HepG2 (cell line): ENCODE measurements at regions of chr7 and their contacts with region 1.

Region 1: GRCh38 chr7:121853307-121853706 is 19.7 kb upstream of the PTPRZ1 start:
- DNase-seq: no peak
- ATAC-seq: no peak
- H3K4me3 ChIP-seq: no peak overlapping the region
- H3K27ac ChIP-seq: no peak overlapping the region
- H3K4me1 ChIP-seq: no peaks in the 10 kb centered on the region
- H3K27me3 ChIP-seq: no peaks in the 10 kb centered on the region
- CTCF ChIP-seq: no peak
- EP300 ChIP-seq: no peak
- POLR2A ChIP-seq: no peak
- RAD21 ChIP-seq: no peak

Region 2: DNA sequence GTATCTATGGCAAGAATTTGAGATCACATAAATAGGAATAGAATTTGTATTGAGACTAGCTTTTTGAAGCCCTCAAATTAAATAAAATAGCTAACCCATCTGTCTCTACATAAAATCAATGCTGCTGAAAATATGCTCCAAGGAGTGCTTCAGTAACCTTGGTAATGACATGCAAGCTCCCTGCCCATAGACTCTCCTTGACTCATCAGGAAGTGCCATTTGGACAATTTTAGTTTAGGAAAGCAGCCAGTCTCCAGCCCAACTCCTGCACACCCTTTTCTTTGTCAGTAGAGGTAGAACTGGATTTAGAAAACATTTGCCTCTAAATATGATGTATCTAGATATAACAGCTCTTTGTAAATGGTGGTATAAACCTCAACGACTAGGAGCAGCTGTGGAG is 50.3 kb before region 1 on chr7:
- CTCF ChIA-PET with region 1: no interaction called
- POLR2A ChIA-PET with region 1: no interaction called
- in situ Hi-C with region 1: no loop called
- intact Hi-C with region 1: loop called (anchors 5 kb)
- DNase-seq: no peak
- ATAC-seq: no peak
- H3K4me3 ChIP-seq: no peak overlapping the region
- H3K27ac ChIP-seq: no peak overlapping the region
- H3K4me1 ChIP-seq: no peaks in the 10 kb centered on the region
- H3K27me3 ChIP-seq: no peaks in the 10 kb centered on the region
- CTCF ChIP-seq: no peak
- EP300 ChIP-seq: no peak
- POLR2A ChIP-seq: no peak
- RAD21 ChIP-seq: no peak